Prostate gland (tissue), 2 donors: ENCODE measurements at regions of chr10 and their contacts with region 1.

Region 1: GRCh38 chr10:75187961-75188426 is 22.6 kb upstream of the VDAC2 start:
- DNase-seq: peak; percentile 72
- H3K4me3 ChIP-seq: no peak overlapping the region
- H3K27ac ChIP-seq: peak overlapping the region; percentile 20 to 55
- H3K4me1 ChIP-seq: peaks cover 3% of the 10 kb centered on the region
- H3K27me3 ChIP-seq: no peaks in the 10 kb centered on the region
- CTCF ChIP-seq: peak; percentile 24 to 85 (median 74)
- POLR2A ChIP-seq: no peak

Region 2: DNA sequence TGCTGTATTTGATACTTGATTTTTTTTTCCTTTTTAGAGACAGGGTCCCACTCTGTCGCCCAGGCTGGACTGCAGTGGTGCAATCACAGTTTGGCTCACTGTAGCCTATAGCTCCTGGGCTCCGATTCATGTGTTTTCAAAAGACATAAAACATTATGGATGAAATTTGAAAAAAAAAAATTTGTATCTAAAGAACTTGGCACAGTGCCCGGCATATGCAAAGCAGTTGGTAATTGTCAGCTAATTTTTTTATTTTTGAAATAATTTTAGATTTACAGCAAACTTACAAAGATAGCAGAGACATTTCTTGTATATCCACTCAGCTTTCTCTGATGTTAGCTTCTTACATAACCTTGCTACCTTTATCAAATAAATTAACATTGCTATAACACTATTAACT is 96.8 kb before region 1 on chr10:
- intact Hi-C with region 1: no loop called
- DNase-seq: no peak
- H3K4me3 ChIP-seq: no peak overlapping the region
- H3K27ac ChIP-seq: no peak overlapping the region
- H3K4me1 ChIP-seq: no peaks in the 10 kb centered on the region
- H3K27me3 ChIP-seq: no peaks in the 10 kb centered on the region
- CTCF ChIP-seq: no peak
- POLR2A ChIP-seq: no peak

Region 3: GRCh38 chr10:75143353-75143752 is 44.6 kb before region 1 on chr10:
- intact Hi-C with region 1: no loop called
- DNase-seq: no peak
- H3K4me3 ChIP-seq: no peak overlapping the region
- H3K27ac ChIP-seq: peak overlapping the region in 1 of 2 donors; percentile 53
- H3K4me1 ChIP-seq: no peaks in the 10 kb centered on the region
- H3K27me3 ChIP-seq: no peaks in the 10 kb centered on the region
- CTCF ChIP-seq: no peak
- POLR2A ChIP-seq: no peak

Region 4: DNA sequence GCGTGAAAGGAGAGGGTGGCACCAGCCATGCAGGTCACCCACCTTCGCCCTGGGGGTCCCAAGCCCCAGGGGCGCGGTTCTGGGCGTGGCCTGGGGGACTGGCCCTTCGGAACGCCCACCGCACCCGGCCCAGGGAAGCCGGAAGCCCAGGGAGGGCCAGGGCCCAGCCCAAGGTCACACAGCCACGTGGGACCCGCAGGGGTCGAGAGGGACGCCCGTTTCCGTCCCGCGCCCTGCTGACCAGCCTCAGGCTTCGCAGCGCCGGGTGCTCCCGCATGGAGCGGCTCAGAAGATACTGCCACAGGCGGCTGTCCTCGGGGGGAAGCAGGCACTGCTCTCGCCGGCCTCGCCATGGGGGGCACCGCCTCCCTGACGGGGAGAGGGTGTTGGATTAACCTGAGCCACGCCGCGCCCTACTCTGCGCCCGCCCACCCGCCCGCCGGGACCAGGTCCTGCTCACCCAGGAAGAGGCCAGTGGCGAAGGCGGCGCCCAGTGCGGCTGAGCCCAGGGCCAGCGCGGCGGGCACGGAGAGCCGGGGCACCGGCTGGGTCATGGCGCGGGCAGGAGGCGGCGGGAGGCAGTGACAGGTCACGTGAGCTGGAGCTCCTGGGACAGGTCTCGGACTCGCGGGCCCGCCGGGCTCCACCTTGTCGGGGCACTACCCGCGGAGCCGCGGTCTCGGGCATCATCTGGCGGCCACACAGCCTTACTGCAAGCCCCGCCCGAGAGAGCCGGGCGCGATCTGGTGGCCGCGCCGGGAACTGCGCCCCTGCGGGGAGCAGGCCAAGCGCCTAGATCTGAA is 47.6 kb after region 1 on chr10 and contains the start of gene COMTD1:
- intact Hi-C with region 1: loop called (anchors 5 kb)
- DNase-seq: peak; percentile 95
- H3K4me3 ChIP-seq: peak within 1 kb of the TSS; percentile 68 to 70
- H3K27ac ChIP-seq: peak within 1 kb of the TSS; percentile 79 to 81
- H3K4me1 ChIP-seq: peaks cover 5% of the 10 kb centered on the region
- H3K27me3 ChIP-seq: no peaks in the 10 kb centered on the region
- CTCF ChIP-seq: peak; percentile 100
- POLR2A ChIP-seq: peak; percentile 29
- total RNA-seq, gene COMTD1: 26.8 to 49.3 TPM

Region 5: GRCh38 chr10:75303045-75303781 is 115.2 kb after region 1 on chr10:
- intact Hi-C with region 1: no loop called
- DNase-seq: no peak
- H3K4me3 ChIP-seq: no peak overlapping the region
- H3K27ac ChIP-seq: no peak overlapping the region
- H3K4me1 ChIP-seq: no peaks in the 10 kb centered on the region
- H3K27me3 ChIP-seq: no peaks in the 10 kb centered on the region
- CTCF ChIP-seq: no peak
- POLR2A ChIP-seq: no peak

Region 6: GRCh38 chr10:76946270-76946669 is 1758.3 kb after region 1 on chr10:
- intact Hi-C with region 1: no loop called
- DNase-seq: no peak
- H3K4me3 ChIP-seq: no peak overlapping the region
- H3K27ac ChIP-seq: no peak overlapping the region
- H3K4me1 ChIP-seq: no peaks in the 10 kb centered on the region
- H3K27me3 ChIP-seq: no peaks in the 10 kb centered on the region
- CTCF ChIP-seq: no peak
- POLR2A ChIP-seq: no peak